Endothelial cell of umbilical vein (primary cell): ENCODE measurements at regions of chr18 and their contacts with region 1.

Region 1: DNA sequence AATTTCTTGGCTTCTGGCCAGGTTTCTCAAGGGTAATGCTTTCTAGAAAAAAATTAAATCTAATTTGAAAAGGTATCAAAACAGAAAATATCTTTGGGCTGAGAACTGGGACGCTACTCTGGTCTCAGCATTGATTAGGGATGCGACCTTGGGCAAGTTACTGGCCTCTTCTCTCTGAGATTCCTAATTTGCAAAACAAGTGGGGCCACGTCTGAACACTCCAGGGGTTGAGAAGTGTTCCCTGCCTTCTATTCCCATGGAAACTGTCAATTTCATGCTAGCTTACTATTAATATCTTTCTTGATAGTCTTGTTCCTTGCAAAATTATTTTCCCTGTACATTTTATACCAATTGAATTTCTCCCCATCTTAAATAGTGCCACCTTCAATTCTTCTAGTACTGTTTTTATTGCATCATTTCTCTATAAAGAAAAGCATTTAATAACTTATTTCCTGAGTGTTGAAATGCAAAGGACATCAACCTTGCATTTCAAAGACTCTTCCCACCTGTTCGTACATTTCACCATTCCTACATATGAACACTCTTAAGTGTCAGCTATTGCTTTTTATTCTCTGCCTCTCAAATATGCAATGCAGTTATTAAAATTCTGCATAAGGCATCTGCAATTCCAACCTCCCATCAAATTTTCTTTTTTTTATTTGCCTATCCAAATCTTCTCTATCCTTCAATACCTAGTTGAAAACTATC is 118.3 kb upstream of the DSEL start:
- DNase-seq: no peak
- H3K4me3 ChIP-seq: no peak overlapping the region
- H3K27ac ChIP-seq: no peak overlapping the region
- H3K4me1 ChIP-seq: no peaks in the 10 kb centered on the region
- H3K27me3 ChIP-seq: no peaks in the 10 kb centered on the region
- CTCF ChIP-seq: no peak
- POLR2A ChIP-seq: no peak

Region 2: DNA sequence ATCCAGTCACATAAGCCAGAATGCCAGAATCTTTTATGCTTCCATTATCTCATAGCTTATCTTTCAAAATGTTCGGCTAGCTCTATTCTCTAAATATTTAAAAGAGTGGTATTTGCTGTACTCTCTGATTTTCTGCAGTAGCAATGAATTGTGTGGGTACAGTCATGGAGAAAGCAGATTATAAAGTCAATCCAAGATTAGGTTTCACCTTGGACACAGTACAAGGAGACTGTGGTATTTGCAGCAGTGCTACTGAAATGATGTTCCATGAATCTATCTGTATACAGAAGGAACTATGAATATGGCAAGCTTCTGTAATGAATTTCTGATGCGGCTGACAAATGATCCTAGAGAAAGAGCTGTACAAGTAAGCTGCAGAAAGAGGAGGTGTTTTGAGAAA is 102.9 kb before region 1 on chr18:
- CTCF ChIA-PET with region 1: no interaction called
- POLR2A ChIA-PET with region 1: no interaction called
- dilution Hi-C with region 1: no loop called
- intact Hi-C with region 1: loop called (anchors 10 kb)
- DNase-seq: no peak
- H3K4me3 ChIP-seq: no peak overlapping the region
- H3K27ac ChIP-seq: no peak overlapping the region
- H3K4me1 ChIP-seq: no peaks in the 10 kb centered on the region
- H3K27me3 ChIP-seq: no peaks in the 10 kb centered on the region
- CTCF ChIP-seq: no peak
- POLR2A ChIP-seq: no peak

Region 3: GRCh38 chr18:67805261-67805660 is 170.5 kb after region 1 on chr18:
- CTCF ChIA-PET with region 1: no interaction called
- POLR2A ChIA-PET with region 1: no interaction called
- dilution Hi-C with region 1: no loop called
- intact Hi-C with region 1: no loop called
- DNase-seq: no peak
- H3K4me3 ChIP-seq: no peak overlapping the region
- H3K27ac ChIP-seq: no peak overlapping the region
- H3K4me1 ChIP-seq: no peaks in the 10 kb centered on the region
- H3K27me3 ChIP-seq: no peaks in the 10 kb centered on the region
- CTCF ChIP-seq: no peak
- POLR2A ChIP-seq: no peak